HEK293T (cell line): ENCODE measurements at regions of chr10 and their contacts with region 1.

Region 1: GRCh38 chr10:97196223-97197029 is 10.7 kb upstream of the SLIT1 start:
- DNase-seq: peak; percentile 86

Region 2: DNA sequence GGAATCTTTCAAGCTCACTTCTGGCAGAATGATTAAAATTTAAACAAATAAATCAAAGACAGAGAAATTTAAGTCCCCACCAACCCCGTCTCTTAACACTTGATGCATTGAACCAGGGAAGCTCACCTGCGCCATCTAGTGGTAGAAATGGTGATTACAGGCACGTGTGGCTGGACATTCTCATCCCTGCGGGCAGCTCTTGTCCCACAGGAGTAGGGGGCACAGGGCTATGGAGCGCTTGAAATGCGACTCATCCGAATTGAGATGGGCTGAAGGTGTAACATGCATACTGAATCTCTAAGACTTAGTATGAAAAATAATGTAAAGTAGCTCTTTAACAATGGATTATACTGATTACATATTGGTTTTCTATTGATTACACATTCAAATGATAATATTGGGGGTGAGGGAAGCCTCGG is 14.1 kb after region 1 on chr10:
- CTCF ChIA-PET with region 1: interaction called, 45 read pairs
- POLR2A ChIA-PET with region 1: no interaction called
- DNase-seq: peak; percentile 88

Region 3: DNA sequence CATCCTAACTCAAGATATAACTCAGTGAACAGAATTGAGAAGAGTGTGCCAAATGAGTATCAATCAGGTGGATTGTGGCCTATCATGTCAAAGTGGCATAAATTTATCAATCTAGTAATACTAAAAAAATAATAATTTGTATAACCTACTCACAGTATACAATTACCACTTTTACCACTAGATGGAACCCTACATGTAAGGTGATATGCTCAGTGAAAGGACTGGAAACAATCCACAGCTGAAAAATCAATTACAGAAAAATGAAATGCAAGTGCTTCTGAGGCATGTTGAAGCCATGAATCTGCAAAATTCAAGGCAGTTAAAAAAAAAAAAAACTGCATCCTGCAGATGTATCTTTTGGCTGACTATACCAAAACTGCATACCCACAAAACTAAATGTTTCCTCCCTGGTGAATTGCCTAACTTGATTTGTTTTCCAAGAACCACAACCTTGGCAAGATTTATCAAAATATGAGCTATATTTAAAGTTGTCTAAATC is 82.1 kb after region 1 on chr10:
- CTCF ChIA-PET with region 1: no interaction called
- POLR2A ChIA-PET with region 1: no interaction called
- DNase-seq: peak; percentile 59